ENCODE measurements at regions of chr11 and their contacts with region 1.

Region 1: DNA sequence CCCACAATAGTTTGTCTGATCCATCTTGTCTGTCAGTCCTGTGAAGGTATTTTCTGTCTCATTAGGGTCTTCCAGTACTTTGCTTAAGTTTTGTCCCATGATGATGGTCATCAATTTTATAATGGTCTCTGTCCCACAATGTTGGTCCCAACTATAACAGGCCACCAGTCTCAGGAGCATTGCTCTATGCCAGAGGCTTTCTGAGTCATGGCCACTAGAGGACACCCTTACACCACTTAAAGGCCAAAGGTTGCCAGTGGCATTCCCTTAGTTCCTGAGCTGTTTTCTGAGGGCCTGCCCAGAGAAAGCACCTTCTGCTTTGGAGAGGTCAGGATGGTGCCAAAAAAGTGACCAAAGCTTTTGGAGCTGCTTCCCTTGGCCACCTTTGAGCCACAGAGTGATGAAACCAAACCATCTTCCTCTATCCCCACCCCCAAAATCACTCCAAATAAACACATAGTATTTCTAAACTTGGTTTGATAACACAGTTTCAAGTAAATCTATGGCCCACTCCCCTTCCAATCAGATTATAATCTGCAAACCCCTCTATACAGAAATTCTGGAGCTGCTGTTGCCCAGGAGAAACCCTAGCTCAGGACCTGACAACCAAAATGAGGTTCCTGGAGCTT is 19.3 kb downstream of the EIF3F start:
- DNase-seq: peak; percentile 54
- ATAC-seq: peak; percentile 97
- H3K4me3 ChIP-seq: no peak overlapping the region
- H3K27ac ChIP-seq: no peak overlapping the region
- H3K4me1 ChIP-seq: no peaks in the 10 kb centered on the region
- H3K27me3 ChIP-seq: no peaks in the 10 kb centered on the region
- CTCF ChIP-seq: peak; percentile 86 to 91 (median 91)
- POLR2A ChIP-seq: no peak
- RAD21 ChIP-seq: peak; percentile 96

Region 2: GRCh38 chr11:7977232-7977917 is 29.1 kb before region 1 on chr11:
- CTCF ChIA-PET with region 1: no interaction called
- POLR2A ChIA-PET with region 1: no interaction called
- RAD21 ChIA-PET with region 1: no interaction called
- intact Hi-C with region 1: no loop called
- DNase-seq: no peak
- ATAC-seq: no peak
- H3K4me3 ChIP-seq: no peak overlapping the region
- H3K27ac ChIP-seq: no peak overlapping the region
- H3K4me1 ChIP-seq: no peaks in the 10 kb centered on the region
- H3K27me3 ChIP-seq: 0 out of 2 replicates have a peak, but pooled peaks cover 8% of the 10 kb centered on the region
- CTCF ChIP-seq: no peak
- POLR2A ChIP-seq: no peak
- RAD21 ChIP-seq: no peak

Region 3: DNA sequence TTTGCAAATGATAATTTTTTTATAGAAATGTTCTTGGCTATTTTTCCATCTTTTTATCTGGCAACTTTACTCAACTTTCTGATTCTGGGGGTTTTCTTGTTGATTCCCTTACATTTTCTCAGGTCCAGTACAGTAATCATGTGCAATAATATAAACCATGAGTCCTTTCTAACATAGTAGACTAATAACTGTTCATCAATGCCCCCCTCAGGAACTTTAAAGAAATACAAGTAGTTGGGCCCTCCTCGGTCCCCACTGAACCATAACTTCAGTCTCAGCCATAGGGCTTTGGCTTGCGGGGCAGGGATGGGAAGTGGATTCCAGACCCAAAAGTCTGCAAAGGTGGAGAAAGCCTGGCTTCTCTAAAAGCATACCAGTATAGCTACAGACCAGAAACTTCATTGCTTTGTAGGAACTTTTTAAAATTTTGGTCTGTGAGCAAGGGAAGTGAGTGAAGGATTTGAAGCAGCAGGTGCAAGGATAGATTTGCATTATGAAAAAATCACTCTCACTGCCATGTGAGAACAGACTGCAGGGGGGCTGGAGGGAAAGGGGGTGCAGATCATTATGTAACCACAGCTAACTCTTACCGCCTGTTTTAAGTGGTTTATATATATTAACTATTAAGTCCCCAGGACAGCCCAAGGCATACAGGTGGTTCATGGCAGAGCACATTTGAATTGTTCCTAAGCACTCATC is 64.1 kb after region 1 on chr11:
- CTCF ChIA-PET with region 1: interaction called, 7 read pairs
- POLR2A ChIA-PET with region 1: no interaction called
- RAD21 ChIA-PET with region 1: no interaction called
- intact Hi-C with region 1: loop called (anchors 1 kb)
- DNase-seq: peak; percentile 21
- ATAC-seq: peak; percentile 82
- H3K4me3 ChIP-seq: no peak overlapping the region
- H3K27ac ChIP-seq: no peak overlapping the region
- H3K4me1 ChIP-seq: peaks cover 14 to 15% of the 10 kb centered on the region in 2 experiments
- H3K27me3 ChIP-seq: 0 out of 2 replicates have a peak, but pooled peaks cover 3% of the 10 kb centered on the region
- CTCF ChIP-seq: peak; percentile 35 to 50 (median 41); a peak in 5 of 6 replicates
- POLR2A ChIP-seq: no peak
- RAD21 ChIP-seq: peak; percentile 56

Region 4: GRCh38 chr11:8087185-8087584 is 80.7 kb after region 1 on chr11:
- CTCF ChIA-PET with region 1: interaction called, 121 read pairs
- POLR2A ChIA-PET with region 1: no interaction called
- RAD21 ChIA-PET with region 1: interaction called, 9 to 14 read pairs
- intact Hi-C with region 1: loop called (anchors 1 kb)
- DNase-seq: no peak
- ATAC-seq: peak; percentile 58
- H3K4me3 ChIP-seq: no peak overlapping the region
- H3K27ac ChIP-seq: no peak overlapping the region
- H3K4me1 ChIP-seq: no peaks in the 10 kb centered on the region
- H3K27me3 ChIP-seq: no peaks in the 10 kb centered on the region
- CTCF ChIP-seq: peak in 2 of 3 experiments; percentile 21 to 35; a peak in 3 of 6 replicates
- POLR2A ChIP-seq: no peak
- RAD21 ChIP-seq: peak; percentile 42; the same call in 1 of the 2 replicates

Region 5: DNA sequence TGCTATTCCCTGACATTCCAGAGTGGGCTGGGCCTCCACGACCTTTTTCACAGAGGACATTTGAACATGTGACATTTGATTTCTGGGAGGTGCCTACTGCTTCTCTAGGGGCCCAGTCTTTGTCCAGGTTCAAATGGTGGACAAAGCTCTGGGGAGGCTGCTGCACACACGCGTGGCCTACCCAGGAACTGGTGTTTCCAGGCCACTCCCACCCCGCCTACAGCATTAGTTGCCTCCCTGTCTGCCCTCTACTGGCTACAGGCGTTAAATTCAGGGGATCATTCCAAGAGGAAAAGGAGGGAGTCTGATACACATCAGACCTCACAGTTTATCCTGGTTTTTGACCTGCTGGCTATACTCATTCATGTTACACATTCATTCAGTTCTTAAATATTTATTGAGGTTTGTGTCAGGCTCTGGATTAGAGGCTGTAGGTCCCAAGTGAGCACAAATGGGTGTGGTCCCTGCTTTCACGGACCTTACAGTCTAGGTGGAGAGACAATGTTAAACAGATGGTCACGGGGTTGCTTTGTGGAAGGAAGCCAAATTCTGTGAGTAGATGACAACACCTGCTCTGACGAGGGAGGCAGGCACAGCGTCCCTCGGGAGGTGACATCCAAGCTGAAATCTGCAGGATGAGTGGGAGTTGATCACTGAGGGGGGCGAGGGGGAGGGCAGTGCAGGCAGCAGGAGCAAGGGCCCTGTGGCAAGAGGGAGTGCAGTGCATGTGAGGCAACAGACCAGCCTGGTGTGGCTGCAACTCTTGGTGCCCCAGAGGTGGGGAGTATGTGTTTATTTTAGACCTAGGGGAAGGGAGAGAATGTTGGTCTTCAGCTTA is 86.3 kb after region 1 on chr11:
- CTCF ChIA-PET with region 1: interaction called, 184 read pairs
- POLR2A ChIA-PET with region 1: no interaction called
- RAD21 ChIA-PET with region 1: interaction called, 9 to 31 read pairs
- intact Hi-C with region 1: loop called (anchors 1 kb)
- DNase-seq: peak; percentile 56
- ATAC-seq: peak; percentile 96
- H3K4me3 ChIP-seq: no peak overlapping the region
- H3K27ac ChIP-seq: no peak overlapping the region
- H3K4me1 ChIP-seq: peaks cover 0 to 10% of the 10 kb centered on the region in 2 experiments; a peak in 2 of 4 replicates
- H3K27me3 ChIP-seq: no peaks in the 10 kb centered on the region
- CTCF ChIP-seq: peak; percentile 59 to 86 (median 80); a peak in 5 of 6 replicates
- POLR2A ChIP-seq: no peak
- RAD21 ChIP-seq: peak; percentile 43

Region 6: DNA sequence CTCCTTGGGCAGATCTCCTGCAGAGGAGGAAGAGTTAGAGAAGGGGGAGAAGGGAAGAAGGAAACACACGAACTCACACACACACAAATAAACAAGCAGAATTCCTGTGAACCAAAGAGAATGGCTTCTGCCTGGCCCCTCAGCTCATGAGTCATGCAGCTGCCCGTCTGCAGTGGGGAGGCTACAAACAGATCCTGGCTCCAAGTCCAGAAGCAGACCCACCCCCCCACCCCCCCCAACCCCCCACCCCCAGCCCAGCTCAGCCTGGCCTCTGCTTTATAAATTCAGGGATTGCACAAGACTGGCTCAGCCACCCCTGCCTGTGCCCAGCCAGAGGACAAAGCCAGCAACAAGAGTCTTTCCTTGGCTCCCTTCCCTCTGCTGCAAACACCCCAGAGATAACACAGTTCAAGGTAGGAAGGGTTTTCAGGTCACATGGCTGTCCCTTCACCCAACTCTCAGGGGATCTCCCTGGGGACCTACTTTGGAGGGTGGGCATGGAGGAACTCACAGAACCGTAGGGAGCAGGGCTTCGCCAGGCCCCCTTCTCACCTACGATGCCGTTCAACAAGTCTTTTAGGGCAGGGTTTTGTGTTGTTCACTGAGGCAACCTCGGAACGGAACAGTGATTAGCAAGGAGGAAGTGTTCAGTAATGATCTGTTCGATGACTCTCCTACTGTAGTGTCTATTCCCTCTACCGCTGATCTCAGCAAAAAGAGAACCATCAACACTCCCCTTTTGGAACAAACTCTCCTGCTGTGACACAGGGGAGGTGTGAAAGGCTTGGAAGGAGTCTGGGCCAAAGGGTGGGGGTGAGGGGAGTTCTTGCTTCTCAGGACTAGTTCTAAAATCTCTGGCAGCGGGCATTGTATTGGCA is 711.7 kb after region 1 on chr11:
- CTCF ChIA-PET with region 1: no interaction called
- POLR2A ChIA-PET with region 1: no interaction called
- RAD21 ChIA-PET with region 1: no interaction called
- intact Hi-C with region 1: no loop called
- DNase-seq: no peak
- ATAC-seq: no peak
- H3K4me3 ChIP-seq: peak overlapping the region in 1 of 2 experiments; percentile 35; a peak in 1 of 4 replicates
- H3K27ac ChIP-seq: peak overlapping the region; percentile 67
- H3K4me1 ChIP-seq: peaks cover 52 to 68% of the 10 kb centered on the region in 2 experiments
- H3K27me3 ChIP-seq: no peaks in the 10 kb centered on the region
- CTCF ChIP-seq: no peak
- POLR2A ChIP-seq: no peak
- RAD21 ChIP-seq: no peak

Measured in HCT116 (cell line).